PC-9 (cell line): ENCODE measurements at regions of chr6 and their contacts with region 1.

Region 1: GRCh38 chr6:17907406-17908229 is 79.8 kb downstream of the KIF13A start:
- DNase-seq: peak; percentile 78 to 94
- H3K4me3 ChIP-seq: no peak overlapping the region; the same call in none of the 2 replicates
- H3K27ac ChIP-seq: peak overlapping the region; percentile 98
- H3K4me1 ChIP-seq: peaks cover 43% of the 10 kb centered on the region
- H3K27me3 ChIP-seq: no peaks in the 10 kb centered on the region
- CTCF ChIP-seq: peak; percentile 16; the same call in 1 of the 2 replicates

Region 2: GRCh38 chr6:17865798-17866725 is 41.6 kb before region 1 on chr6:
- CTCF ChIA-PET with region 1: interaction called, 14 read pairs
- POLR2A ChIA-PET with region 1: interaction called, 4 read pairs
- intact Hi-C with region 1: loop called (anchors 1 kb)
- DNase-seq: peak; percentile 93 to 99
- H3K4me3 ChIP-seq: peak overlapping the region; percentile 24; the same call in 1 of the 2 replicates
- H3K27ac ChIP-seq: peak overlapping the region; percentile 94
- H3K4me1 ChIP-seq: peaks cover 57% of the 10 kb centered on the region
- H3K27me3 ChIP-seq: no peaks in the 10 kb centered on the region
- CTCF ChIP-seq: no peak

Region 3: GRCh38 chr6:17987576-17988421 is 80.2 kb after region 1 on chr6 and contains the start of gene KIF13A:
- CTCF ChIA-PET with region 1: no interaction called
- POLR2A ChIA-PET with region 1: no interaction called
- intact Hi-C with region 1: loop called (anchors 2 kb)
- DNase-seq: peak; percentile 46 to 69
- H3K4me3 ChIP-seq: peak within 1 kb of the TSS; percentile 98
- H3K27ac ChIP-seq: peak within 1 kb of the TSS; percentile 45
- H3K4me1 ChIP-seq: peaks cover 59% of the 10 kb centered on the region
- H3K27me3 ChIP-seq: no peaks in the 10 kb centered on the region
- CTCF ChIP-seq: no peak
- total RNA-seq, gene KIF13A: 48.6 and 52.2 TPM in 2 replicates

Region 4: GRCh38 chr6:18088419-18089296 is 181.0 kb after region 1 on chr6:
- CTCF ChIA-PET with region 1: no interaction called
- POLR2A ChIA-PET with region 1: no interaction called
- intact Hi-C with region 1: no loop called
- DNase-seq: no peak
- H3K4me3 ChIP-seq: no peak overlapping the region
- H3K27ac ChIP-seq: no peak overlapping the region
- H3K4me1 ChIP-seq: no peaks in the 10 kb centered on the region
- H3K27me3 ChIP-seq: no peaks in the 10 kb centered on the region
- CTCF ChIP-seq: no peak

Region 5: GRCh38 chr6:18155150-18155863 is 247.7 kb after region 1 on chr6 and contains the start of gene KDM1B:
- CTCF ChIA-PET with region 1: no interaction called
- POLR2A ChIA-PET with region 1: interaction called, 11 read pairs
- intact Hi-C with region 1: no loop called
- DNase-seq: peak; percentile 88 to 99
- H3K4me3 ChIP-seq: peak within 1 kb of the TSS; percentile 95
- H3K27ac ChIP-seq: peak within 1 kb of the TSS; percentile 35
- H3K4me1 ChIP-seq: peaks cover 25% of the 10 kb centered on the region
- H3K27me3 ChIP-seq: no peaks in the 10 kb centered on the region
- CTCF ChIP-seq: no peak
- total RNA-seq, gene KDM1B: 15.6 and 21.5 TPM in 2 replicates